ENCODE measurements at regions of chr16 and their contacts with region 1.

Region 1: DNA sequence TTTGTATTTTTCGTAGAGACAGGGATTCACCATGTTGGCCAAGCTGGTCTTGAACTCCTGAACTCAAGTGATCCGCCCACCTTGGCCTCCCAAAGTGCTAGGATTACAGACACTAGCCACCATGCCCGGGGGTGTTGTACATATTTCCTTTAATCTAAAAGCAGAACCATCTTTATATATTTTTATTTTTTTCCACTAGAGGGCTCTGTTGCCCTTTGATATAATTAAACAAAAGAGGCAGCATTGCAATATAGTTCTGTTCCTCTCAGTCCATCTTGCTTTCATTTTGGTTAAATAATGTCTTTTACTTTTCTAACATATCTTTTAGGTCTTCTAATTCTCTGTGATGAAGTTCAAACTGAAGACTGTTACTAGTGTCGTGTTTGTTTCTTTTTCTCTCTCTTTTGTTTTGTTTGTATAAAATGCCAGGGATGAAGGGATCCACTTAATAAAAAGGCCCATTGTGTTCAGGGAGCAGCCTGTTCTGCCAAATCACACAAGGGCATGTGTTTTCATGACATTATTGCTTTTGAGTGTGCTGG is 23.4 kb downstream of the WWOX start:
- DNase-seq: peak in 2 of 4 donors; percentile 70 to 74
- ATAC-seq: peak; percentile 92
- H3K4me3 ChIP-seq: no peak overlapping the region
- H3K27ac ChIP-seq: peak overlapping the region in 1 of 2 donors; percentile 58
- H3K4me1 ChIP-seq: peaks cover 3 to 5% of the 10 kb centered on the region in 2 donors
- H3K27me3 ChIP-seq: no peaks in the 10 kb centered on the region
- CTCF ChIP-seq: peak; percentile 17 to 56

Region 2: GRCh38 chr16:78235168-78235800 is 112.4 kb after region 1 on chr16:
- intact Hi-C with region 1: loop called in 1 of 2 experiments (anchors 10 kb)
- DNase-seq: peak in 2 of 4 donors; percentile 63 to 85
- ATAC-seq: peak; percentile 97
- H3K4me3 ChIP-seq: no peak overlapping the region
- H3K27ac ChIP-seq: no peak overlapping the region
- H3K4me1 ChIP-seq: peaks cover 0 to 4% of the 10 kb centered on the region in 2 donors
- H3K27me3 ChIP-seq: no peaks in the 10 kb centered on the region
- CTCF ChIP-seq: peak; percentile 86 to 91

Region 3: DNA sequence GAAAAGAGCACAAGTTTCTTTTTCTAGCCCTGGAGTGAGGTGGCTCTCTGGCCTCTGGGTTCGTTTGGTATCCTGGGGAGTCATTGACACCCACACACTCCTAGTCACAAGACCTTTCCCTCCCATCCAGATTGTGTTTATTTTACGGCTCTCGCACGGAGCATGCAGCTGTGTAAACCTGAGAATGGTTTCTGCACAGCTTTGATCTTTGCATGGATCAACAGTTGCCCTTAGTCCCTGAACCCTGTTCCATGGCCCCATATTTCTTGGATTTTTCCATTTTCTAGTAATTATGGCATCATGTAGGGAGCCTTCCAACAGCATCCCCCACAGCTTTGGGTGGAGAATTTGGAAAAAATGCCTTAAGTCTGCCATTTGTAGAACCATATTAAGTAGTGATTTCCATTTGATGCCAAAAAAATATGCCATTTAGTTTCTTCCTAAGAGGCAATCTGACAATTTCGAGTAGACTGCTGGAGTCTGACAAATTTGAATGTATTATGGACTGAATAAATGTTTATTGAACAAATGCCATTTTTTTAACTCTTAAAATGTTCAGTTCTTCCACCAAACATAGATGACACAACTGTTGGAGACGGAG is 174.3 kb after region 1 on chr16:
- intact Hi-C with region 1: no loop called
- DNase-seq: no peak
- ATAC-seq: no peak
- H3K4me3 ChIP-seq: no peak overlapping the region
- H3K27ac ChIP-seq: no peak overlapping the region
- H3K4me1 ChIP-seq: peaks cover 3 to 10% of the 10 kb centered on the region in 2 donors
- H3K27me3 ChIP-seq: no peaks in the 10 kb centered on the region
- CTCF ChIP-seq: no peak